Heart left ventricle (tissue), 16 donors: ENCODE measurements at regions of chr3 and their contacts with region 1.

Region 1: DNA sequence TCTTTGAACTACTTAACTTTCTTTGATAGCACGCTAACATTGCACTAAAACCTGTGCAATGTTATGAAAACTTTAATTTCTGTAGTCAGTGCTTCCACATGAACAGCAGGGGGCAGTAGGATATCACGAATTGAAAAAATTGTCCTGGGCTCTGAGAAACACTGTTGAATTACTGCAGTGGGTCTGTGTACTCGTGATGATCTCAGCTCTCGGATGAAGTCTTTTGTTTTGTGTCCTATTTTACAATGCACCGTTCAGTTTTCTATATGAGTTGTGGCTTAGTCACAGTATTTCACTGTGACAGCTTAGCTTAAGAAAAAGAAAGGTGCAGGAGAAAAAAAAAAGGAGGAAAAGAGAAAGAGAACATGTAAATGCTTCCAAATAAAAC is 141.3 kb upstream of the CCDC54 start:
- DNase-seq: peak in 3 of 5 donors; percentile 31 to 60 (median 52)
- ATAC-seq: peak; percentile 60 to 81 (median 74)
- H3K4me3 ChIP-seq: peak overlapping the region in 11 of 12 donors; percentile 21 to 62 (median 49)
- H3K27ac ChIP-seq: peak overlapping the region in 11 of 12 donors; percentile 16 to 70 (median 53)
- H3K4me1 ChIP-seq: peaks cover 0 to 18% (median 8%) of the 10 kb centered on the region in 12 donors
- H3K27me3 ChIP-seq: no peaks in the 10 kb centered on the region
- CTCF ChIP-seq: peak; percentile 81 to 94 (median 89)
- POLR2A ChIP-seq: no peak

Region 2: DNA sequence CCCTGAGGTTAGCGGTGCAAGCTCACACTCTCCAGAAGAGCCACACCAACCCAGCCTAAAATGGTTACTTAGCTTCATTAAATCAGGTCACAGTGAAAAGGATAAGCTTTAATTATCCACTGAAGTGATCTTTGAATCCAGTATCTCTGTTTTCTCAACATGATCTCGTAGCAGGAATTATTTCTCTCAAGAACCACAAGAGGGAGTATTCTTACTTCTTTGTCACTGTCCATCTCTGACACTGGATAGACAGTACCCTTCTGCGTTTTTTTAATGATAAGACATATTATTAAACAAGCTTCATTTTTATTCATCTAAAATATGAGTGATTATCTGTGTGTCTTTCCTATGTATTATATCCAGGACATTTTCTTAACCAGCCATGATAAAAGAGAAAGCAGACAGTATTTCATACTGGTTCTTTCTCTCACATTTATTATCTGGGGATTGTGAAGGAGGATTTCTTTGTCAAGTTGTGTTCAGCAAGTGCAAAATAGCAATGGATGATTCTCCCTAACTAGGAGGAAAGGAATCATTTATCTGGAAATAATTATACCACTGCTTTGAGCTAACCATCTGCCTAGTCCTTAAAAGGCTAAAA is 36.0 kb after region 1 on chr3:
- intact Hi-C with region 1: loop called in 1 of 10 experiments (anchors 5 kb)
- DNase-seq: no peak
- ATAC-seq: peak in 3 of 4 donors; percentile 42 to 73 (median 53)
- H3K4me3 ChIP-seq: no peak overlapping the region
- H3K27ac ChIP-seq: no peak overlapping the region
- H3K4me1 ChIP-seq: peaks cover 0 to 3% (median 0%) of the 10 kb centered on the region in 12 donors
- H3K27me3 ChIP-seq: no peaks in the 10 kb centered on the region
- CTCF ChIP-seq: peak; percentile 50 to 76 (median 62)
- POLR2A ChIP-seq: no peak

Region 3: GRCh38 chr3:107384907-107385306 is 149.0 kb after region 1 on chr3:
- intact Hi-C with region 1: no loop called
- DNase-seq: no peak
- ATAC-seq: no peak
- H3K4me3 ChIP-seq: no peak overlapping the region
- H3K27ac ChIP-seq: no peak overlapping the region
- H3K4me1 ChIP-seq: peaks cover 0 to 6% (median 0%) of the 10 kb centered on the region in 12 donors
- H3K27me3 ChIP-seq: no peaks in the 10 kb centered on the region
- CTCF ChIP-seq: no peak
- POLR2A ChIP-seq: no peak

Region 4: GRCh38 chr3:107522510-107523288 is 286.8 kb after region 1 on chr3 and contains the start of gene BBX:
- intact Hi-C with region 1: loop called in 7 of 10 experiments (anchors 5 to 10 kb)
- DNase-seq: peak; percentile 91 to 95 (median 92)
- ATAC-seq: peak; percentile 97 to 99 (median 98)
- H3K4me3 ChIP-seq: peak within 1 kb of the TSS; percentile 75 to 97 (median 88)
- H3K27ac ChIP-seq: peak within 1 kb of the TSS; percentile 77 to 96 (median 92)
- H3K4me1 ChIP-seq: peaks cover 0 to 20% (median 10%) of the 10 kb centered on the region in 12 donors
- H3K27me3 ChIP-seq: no peaks in the 10 kb centered on the region
- CTCF ChIP-seq: peak in 3 of 12 donors; percentile 8 to 11 (median 8)
- POLR2A ChIP-seq: peak; percentile 31 to 89
- total RNA-seq, gene BBX: 34.0 to 60.5 (median 48.0) TPM

Region 5: GRCh38 chr3:107740992-107741896 is 505.3 kb after region 1 on chr3:
- intact Hi-C with region 1: loop called in 5 of 10 experiments (anchors 10 kb)
- DNase-seq: no peak
- ATAC-seq: no peak
- H3K4me3 ChIP-seq: no peak overlapping the region
- H3K27ac ChIP-seq: no peak overlapping the region
- H3K4me1 ChIP-seq: peaks cover 0 to 7% (median 0%) of the 10 kb centered on the region in 12 donors
- H3K27me3 ChIP-seq: no peaks in the 10 kb centered on the region
- CTCF ChIP-seq: peak; percentile 29 to 73 (median 57)
- POLR2A ChIP-seq: no peak

Region 6: GRCh38 chr3:107846279-107846852 is 610.4 kb after region 1 on chr3:
- intact Hi-C with region 1: loop called in 1 of 10 experiments (anchors 5 kb)
- DNase-seq: peak; percentile 35 to 65 (median 57)
- ATAC-seq: peak in 3 of 4 donors; percentile 68 to 86 (median 72)
- H3K4me3 ChIP-seq: no peak overlapping the region
- H3K27ac ChIP-seq: no peak overlapping the region
- H3K4me1 ChIP-seq: peaks cover 0 to 5% (median 0%) of the 10 kb centered on the region in 12 donors
- H3K27me3 ChIP-seq: no peaks in the 10 kb centered on the region
- CTCF ChIP-seq: peak; percentile 37 to 72 (median 52)
- POLR2A ChIP-seq: no peak

Region 7: DNA sequence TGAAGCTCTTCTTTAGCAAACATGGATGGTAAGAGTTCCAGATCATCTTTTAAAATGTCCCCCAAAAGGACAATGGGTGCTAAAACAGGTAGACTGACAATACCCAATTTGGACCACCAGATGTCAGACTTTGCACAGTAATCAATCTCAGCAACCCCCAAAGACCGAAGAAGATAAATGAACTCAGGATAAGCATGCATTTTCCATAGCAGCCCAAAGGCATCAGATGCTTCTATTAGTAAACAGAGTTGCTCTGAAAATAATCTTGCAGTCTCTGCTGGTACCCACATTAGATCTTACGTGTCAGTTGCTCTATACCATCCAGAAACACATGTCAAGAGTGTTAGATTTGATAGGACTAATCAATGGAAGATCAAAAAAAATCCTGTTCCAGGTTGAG is 1253.8 kb after region 1 on chr3:
- intact Hi-C with region 1: loop called in 1 of 10 experiments (anchors 10 kb)
- DNase-seq: no peak
- ATAC-seq: peak in 3 of 4 donors; percentile 47 to 64 (median 54)
- H3K4me3 ChIP-seq: no peak overlapping the region
- H3K27ac ChIP-seq: no peak overlapping the region
- H3K4me1 ChIP-seq: peaks cover 0 to 22% (median 5%) of the 10 kb centered on the region in 12 donors
- H3K27me3 ChIP-seq: no peaks in the 10 kb centered on the region
- CTCF ChIP-seq: peak; percentile 58 to 83 (median 76)
- POLR2A ChIP-seq: no peak